ENCODE measurements at regions of chr2 and their contacts with region 1.

Region 1: GRCh38 chr2:168773719-168774521 is 28.5 kb upstream of the NOSTRIN start:
- H3K4me3 ChIP-seq: no peak overlapping the region
- H3K27ac ChIP-seq: no peak overlapping the region
- H3K4me1 ChIP-seq: no peaks in the 10 kb centered on the region
- CTCF ChIP-seq: peak; percentile 54

Region 2: DNA sequence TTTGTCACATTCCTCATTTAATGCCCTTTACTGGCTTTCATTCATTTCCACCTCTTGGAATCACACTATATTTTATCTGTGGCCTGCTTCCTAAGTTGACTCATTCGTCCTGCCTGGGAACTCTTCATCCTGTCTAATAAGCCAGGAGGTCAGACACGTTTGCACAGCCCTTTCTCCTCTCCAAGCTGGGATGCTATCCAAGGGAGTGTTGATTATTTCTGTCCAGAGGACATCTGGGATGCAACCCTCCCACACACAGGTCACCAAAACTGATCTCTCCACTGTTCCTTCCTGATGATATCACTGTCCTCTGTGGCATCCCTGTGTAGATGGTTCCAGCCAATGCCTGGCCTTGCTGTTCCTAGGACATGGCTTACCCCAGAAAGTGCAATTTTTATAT is 51.3 kb before region 1 on chr2:
- CTCF ChIA-PET with region 1: no interaction called
- POLR2A ChIA-PET with region 1: no interaction called
- H3K4me3 ChIP-seq: no peak overlapping the region
- H3K27ac ChIP-seq: no peak overlapping the region
- H3K4me1 ChIP-seq: no peaks in the 10 kb centered on the region
- CTCF ChIP-seq: no peak

Region 3: DNA sequence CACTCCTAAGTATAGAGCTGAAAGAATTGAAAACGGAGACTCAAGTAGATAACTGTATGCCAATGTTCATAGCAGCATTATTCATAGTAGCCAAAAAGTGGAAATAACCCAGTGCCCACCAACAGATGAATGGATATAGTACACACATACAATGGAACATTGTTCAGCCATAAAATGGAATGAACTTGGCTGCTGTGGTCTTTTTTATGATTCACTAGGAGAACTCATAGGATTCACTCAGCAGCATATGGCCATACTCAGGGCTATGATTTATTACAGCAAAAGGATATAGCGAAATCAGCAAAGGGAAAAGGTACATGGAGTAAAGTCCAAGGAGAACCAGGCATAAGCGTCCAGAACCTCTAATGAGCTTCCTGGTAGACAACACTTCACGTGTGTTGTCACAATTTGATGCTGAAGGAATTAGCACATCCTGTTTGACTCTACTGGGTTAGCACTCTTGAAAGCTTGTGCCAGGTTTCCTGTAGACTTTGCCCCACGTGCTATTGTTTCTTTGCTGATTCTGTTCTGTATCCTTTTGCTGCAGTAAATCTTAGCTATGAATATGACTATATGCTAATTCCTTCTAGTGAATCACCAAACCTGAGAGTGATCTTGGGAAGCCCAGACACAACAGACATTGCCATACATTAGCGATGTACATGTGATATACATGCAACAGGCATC is 100.6 kb after region 1 on chr2:
- CTCF ChIA-PET with region 1: no interaction called
- POLR2A ChIA-PET with region 1: no interaction called
- H3K4me3 ChIP-seq: no peak overlapping the region
- H3K27ac ChIP-seq: no peak overlapping the region
- H3K4me1 ChIP-seq: no peaks in the 10 kb centered on the region
- CTCF ChIP-seq: no peak

Region 4: DNA sequence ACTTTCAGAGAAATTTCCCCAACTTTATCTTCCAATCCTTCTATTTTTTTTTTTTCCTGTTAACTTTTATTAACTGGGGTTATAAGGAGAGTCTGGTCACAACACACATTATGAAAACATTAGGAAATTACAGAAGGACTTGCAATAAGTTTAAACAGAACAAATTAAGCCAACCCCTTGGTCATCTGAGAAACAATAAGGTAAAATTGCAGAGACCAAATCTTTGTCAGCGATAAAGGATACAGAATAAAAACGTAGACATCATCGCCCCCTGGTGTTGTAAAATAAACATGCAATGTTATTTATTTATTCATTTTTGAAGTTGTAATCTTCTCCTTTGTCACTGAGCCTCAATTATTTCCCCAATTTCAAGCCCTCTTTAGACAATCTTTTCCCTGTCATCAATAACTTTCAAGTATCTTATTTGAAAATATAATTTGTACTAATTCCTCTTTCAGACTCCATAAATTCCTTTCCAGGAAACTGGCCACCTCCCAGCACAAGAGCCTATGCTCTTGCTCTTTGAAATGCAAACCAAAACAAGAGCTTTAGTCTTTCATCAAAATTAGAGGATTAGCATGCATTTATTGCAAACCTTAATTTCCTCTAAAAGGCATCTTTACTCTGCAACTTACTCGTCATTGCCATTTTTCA is 146.7 kb after region 1 on chr2:
- CTCF ChIA-PET with region 1: interaction called, 55 read pairs
- POLR2A ChIA-PET with region 1: no interaction called
- H3K4me3 ChIP-seq: no peak overlapping the region
- H3K27ac ChIP-seq: no peak overlapping the region
- H3K4me1 ChIP-seq: no peaks in the 10 kb centered on the region
- CTCF ChIP-seq: peak; percentile 28; the same call in 1 of the 2 replicates

Measured in HEK293 (cell line).